Dendritic cell treated with granulocyte-macrophage colony-stimulating factor and Interleukin-4, amounts not matched to agents 40 ng/mL and 50 ng/mL, for 4 days (primary cell): ENCODE measurements at regions of chr10 and their contacts with region 1.

Region 1: DNA sequence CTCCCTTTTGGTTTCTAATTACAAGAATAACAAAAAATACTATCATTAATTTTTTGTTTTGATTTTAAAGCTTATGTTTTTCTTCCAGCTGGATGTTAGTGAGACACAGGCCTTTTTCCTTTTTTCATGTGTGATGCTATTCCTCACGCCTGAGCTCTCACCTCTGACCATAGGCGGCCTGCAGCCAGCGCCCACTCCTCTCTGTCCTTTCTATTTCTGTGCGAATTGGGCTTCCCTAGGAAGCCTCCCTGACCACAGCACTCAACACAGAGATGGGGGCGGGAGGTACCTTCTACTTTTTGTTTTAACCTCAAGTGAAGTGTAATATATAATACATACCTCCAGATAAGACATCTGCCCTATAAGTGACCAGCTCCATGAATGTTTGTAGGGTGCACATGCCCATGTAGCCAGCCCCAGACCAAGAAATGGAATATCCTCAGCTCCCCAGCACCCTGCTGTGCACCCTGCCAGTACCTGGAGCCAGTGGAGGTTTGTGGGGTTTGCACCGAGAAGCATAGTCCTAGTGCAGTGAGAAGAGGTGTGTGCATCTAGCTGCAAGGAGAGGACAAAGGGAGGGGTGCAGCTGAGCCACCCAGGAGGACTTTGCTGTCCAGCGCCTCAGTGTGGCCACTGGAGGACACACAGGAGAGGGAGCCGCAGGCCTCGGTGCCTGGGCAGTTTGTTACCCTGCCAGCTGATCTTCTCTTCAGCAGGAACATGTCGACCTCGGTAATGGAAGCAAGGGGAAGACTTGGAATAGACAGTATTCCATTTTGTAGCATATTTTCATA is 38.5 kb downstream of the BNIP3 start:
- H3K4me3 Mint-ChIP-seq: no peak overlapping the region
- H3K27ac Mint-ChIP-seq: no peak overlapping the region
- H3K4me1 Mint-ChIP-seq: no peaks in the 10 kb centered on the region
- H3K27me3 Mint-ChIP-seq: no peaks in the 10 kb centered on the region

Region 2: GRCh38 chr10:131885391-131886161 is 57.6 kb before region 1 on chr10:
- intact Hi-C with region 1: loop called (anchors 2 kb)
- H3K4me3 Mint-ChIP-seq: no peak overlapping the region
- H3K27ac Mint-ChIP-seq: no peak overlapping the region
- H3K4me1 Mint-ChIP-seq: no peaks in the 10 kb centered on the region
- H3K27me3 Mint-ChIP-seq: peaks cover 2% of the 10 kb centered on the region

Region 3: GRCh38 chr10:132107186-132107948 is 164.1 kb after region 1 on chr10:
- intact Hi-C with region 1: no loop called
- H3K4me3 Mint-ChIP-seq: no peak overlapping the region
- H3K27ac Mint-ChIP-seq: no peak overlapping the region
- H3K4me1 Mint-ChIP-seq: no peaks in the 10 kb centered on the region
- H3K27me3 Mint-ChIP-seq: peaks cover 4% of the 10 kb centered on the region